PC-9 (cell line): ENCODE measurements at regions of chr3 and their contacts with region 1.

Region 1: GRCh38 chr3:168040607-168041208 is 55.0 kb downstream of the GOLIM4 start:
- DNase-seq: no peak
- H3K4me3 ChIP-seq: no peak overlapping the region
- H3K27ac ChIP-seq: no peak overlapping the region
- H3K4me1 ChIP-seq: no peaks in the 10 kb centered on the region
- H3K27me3 ChIP-seq: no peaks in the 10 kb centered on the region
- CTCF ChIP-seq: peak; percentile 74

Region 2: GRCh38 chr3:167837466-167837865 is 203.2 kb before region 1 on chr3:
- CTCF ChIA-PET with region 1: no interaction called
- POLR2A ChIA-PET with region 1: no interaction called
- intact Hi-C with region 1: loop called (anchors 5 kb)
- DNase-seq: no peak
- H3K4me3 ChIP-seq: no peak overlapping the region
- H3K27ac ChIP-seq: no peak overlapping the region
- H3K4me1 ChIP-seq: no peaks in the 10 kb centered on the region
- H3K27me3 ChIP-seq: no peaks in the 10 kb centered on the region
- CTCF ChIP-seq: peak; percentile 47; the same call in 1 of the 2 replicates

Region 3: GRCh38 chr3:167929968-167930367 is 110.7 kb before region 1 on chr3:
- CTCF ChIA-PET with region 1: no interaction called
- POLR2A ChIA-PET with region 1: no interaction called
- intact Hi-C with region 1: loop called (anchors 1 kb)
- DNase-seq: no peak
- H3K4me3 ChIP-seq: no peak overlapping the region
- H3K27ac ChIP-seq: no peak overlapping the region
- H3K4me1 ChIP-seq: no peaks in the 10 kb centered on the region
- H3K27me3 ChIP-seq: no peaks in the 10 kb centered on the region
- CTCF ChIP-seq: no peak